ENCODE measurements at regions of chr16 and their contacts with region 1.

Region 1: GRCh38 chr16:30429678-30430427 is at the start of gene DCTPP1:
- DNase-seq: peak; percentile 100
- H3K4me3 Mint-ChIP-seq: no peak within 1 kb of the TSS
- H3K27ac Mint-ChIP-seq: no peak within 1 kb of the TSS
- H3K4me1 Mint-ChIP-seq: peaks cover 15% of the 10 kb centered on the region
- H3K27me3 Mint-ChIP-seq: no peaks in the 10 kb centered on the region
- CTCF ChIP-seq: peak; percentile 71
- total RNA-seq, gene DCTPP1: 29.1 and 42.4 TPM in 2 replicates

Region 2: GRCh38 chr16:30417529-30418349 is 12.1 kb before region 1 on chr16:
- CTCF ChIA-PET with region 1: interaction called, 25 read pairs
- POLR2A ChIA-PET with region 1: interaction called, 22 read pairs
- intact Hi-C with region 1: no loop called
- DNase-seq: peak; percentile 74
- H3K4me3 Mint-ChIP-seq: peak overlapping the region; percentile 58
- H3K27ac Mint-ChIP-seq: no peak overlapping the region
- H3K4me1 Mint-ChIP-seq: peaks cover 4% of the 10 kb centered on the region
- H3K27me3 Mint-ChIP-seq: no peaks in the 10 kb centered on the region
- CTCF ChIP-seq: no peak

Region 3: DNA sequence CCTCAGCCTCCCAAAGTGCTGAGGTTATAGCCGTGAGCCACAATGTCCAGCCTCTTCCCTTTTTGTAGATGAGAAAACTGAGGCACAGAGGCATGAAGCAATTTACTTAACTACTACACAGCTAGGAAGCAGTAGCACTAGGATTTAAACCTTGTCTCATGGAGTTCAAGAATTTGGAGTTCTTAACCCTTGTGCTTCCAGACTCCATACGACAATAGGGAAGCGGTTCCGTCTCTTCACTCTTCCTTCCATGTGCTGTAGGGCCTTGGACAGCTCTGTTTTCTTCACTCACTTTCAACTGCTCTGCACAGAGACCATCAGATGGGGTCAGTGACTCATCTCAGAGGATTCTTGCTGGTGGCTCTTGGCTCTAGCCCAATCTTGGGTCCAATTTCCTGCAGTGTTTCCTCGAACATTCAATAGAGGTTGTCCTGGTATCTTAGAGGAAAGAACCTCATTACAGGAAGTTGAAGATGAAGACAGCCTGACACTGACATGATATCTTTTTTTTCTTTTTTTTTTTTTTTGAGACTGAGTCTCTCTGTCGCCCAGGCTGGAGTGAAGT is 62.0 kb after region 1 on chr16:
- CTCF ChIA-PET with region 1: interaction called, 7 read pairs
- POLR2A ChIA-PET with region 1: interaction called, 14 read pairs
- intact Hi-C with region 1: no loop called
- DNase-seq: peak; percentile 82
- H3K4me3 Mint-ChIP-seq: no peak overlapping the region
- H3K27ac Mint-ChIP-seq: no peak overlapping the region
- H3K4me1 Mint-ChIP-seq: peaks cover 20% of the 10 kb centered on the region
- H3K27me3 Mint-ChIP-seq: no peaks in the 10 kb centered on the region
- CTCF ChIP-seq: no peak

Region 4: DNA sequence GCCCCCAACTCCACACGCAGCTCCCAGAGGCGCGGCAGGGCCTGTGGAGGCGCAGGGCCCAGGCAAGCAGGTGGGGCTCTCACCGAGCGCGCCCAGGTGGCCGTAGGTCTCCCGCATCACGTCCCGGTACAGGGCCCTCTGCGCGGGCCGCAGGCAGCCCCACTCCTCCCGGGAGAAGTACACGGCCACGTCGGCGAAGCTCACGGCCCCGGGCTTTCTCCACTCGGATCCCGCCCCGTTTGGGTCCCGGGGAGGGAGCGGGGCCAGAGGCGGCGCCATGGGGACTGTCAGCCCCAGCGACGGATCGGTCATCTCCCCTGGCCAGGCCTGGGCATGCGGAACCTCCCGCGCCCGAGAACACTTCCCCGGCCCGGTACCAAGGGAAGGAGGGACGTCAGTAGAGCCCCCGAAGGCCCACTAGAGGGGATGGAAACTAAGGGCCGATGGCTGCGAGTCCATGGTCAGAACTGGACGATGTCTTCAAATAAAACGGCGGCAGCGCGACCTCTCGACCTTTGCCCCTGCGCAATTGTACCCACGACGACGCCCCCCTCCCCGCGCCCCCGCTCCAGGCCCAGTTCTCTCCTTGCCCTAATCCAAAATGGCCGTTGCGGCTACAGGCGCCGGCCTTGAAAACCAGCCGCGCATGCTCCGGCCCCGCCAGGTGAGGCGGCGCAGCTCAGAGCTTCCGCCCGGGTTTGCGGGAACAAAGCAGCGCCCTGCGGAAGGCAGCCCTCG is 104.7 kb after region 1 on chr16 and contains the start of gene ZNF747:
- CTCF ChIA-PET with region 1: interaction called, 23 read pairs
- POLR2A ChIA-PET with region 1: interaction called, 52 read pairs
- intact Hi-C with region 1: loop called (anchors 5 kb)
- DNase-seq: peak; percentile 86
- H3K4me3 Mint-ChIP-seq: peak within 1 kb of the TSS; percentile 91
- H3K27ac Mint-ChIP-seq: peak within 1 kb of the TSS; percentile 95
- H3K4me1 Mint-ChIP-seq: peaks cover 6% of the 10 kb centered on the region
- H3K27me3 Mint-ChIP-seq: no peaks in the 10 kb centered on the region
- CTCF ChIP-seq: no peak
- total RNA-seq, gene ZNF747: 13.7 TPM in 2 replicates

Region 5: GRCh38 chr16:30571695-30572600 is 142.1 kb after region 1 on chr16 and contains the start of gene ZNF688:
- CTCF ChIA-PET with region 1: interaction called, 11 read pairs
- POLR2A ChIA-PET with region 1: interaction called, 12 read pairs
- intact Hi-C with region 1: no loop called
- DNase-seq: peak; percentile 97
- H3K4me3 Mint-ChIP-seq: peak within 1 kb of the TSS; percentile 75
- H3K27ac Mint-ChIP-seq: peak within 1 kb of the TSS; percentile 76
- H3K4me1 Mint-ChIP-seq: peaks cover 19% of the 10 kb centered on the region
- H3K27me3 Mint-ChIP-seq: no peaks in the 10 kb centered on the region
- CTCF ChIP-seq: no peak
- total RNA-seq, gene ZNF688: 9.0 and 11.6 TPM in 2 replicates

Region 6: GRCh38 chr16:30602616-30603277 is 172.9 kb after region 1 on chr16:
- CTCF ChIA-PET with region 1: interaction called, 4 read pairs
- POLR2A ChIA-PET with region 1: interaction called, 11 read pairs
- intact Hi-C with region 1: no loop called
- DNase-seq: no peak
- H3K4me3 Mint-ChIP-seq: no peak overlapping the region
- H3K27ac Mint-ChIP-seq: no peak overlapping the region
- H3K4me1 Mint-ChIP-seq: no peaks in the 10 kb centered on the region
- H3K27me3 Mint-ChIP-seq: no peaks in the 10 kb centered on the region
- CTCF ChIP-seq: no peak

Measured in MCF 10A (cell line).